Activated naive CD4-positive, alpha-beta T cell treated with anti-CD3 and anti-CD28 coated beads for 36 hours (primary cell): ENCODE measurements at regions of chr6 and their contacts with region 1.

Region 1: DNA sequence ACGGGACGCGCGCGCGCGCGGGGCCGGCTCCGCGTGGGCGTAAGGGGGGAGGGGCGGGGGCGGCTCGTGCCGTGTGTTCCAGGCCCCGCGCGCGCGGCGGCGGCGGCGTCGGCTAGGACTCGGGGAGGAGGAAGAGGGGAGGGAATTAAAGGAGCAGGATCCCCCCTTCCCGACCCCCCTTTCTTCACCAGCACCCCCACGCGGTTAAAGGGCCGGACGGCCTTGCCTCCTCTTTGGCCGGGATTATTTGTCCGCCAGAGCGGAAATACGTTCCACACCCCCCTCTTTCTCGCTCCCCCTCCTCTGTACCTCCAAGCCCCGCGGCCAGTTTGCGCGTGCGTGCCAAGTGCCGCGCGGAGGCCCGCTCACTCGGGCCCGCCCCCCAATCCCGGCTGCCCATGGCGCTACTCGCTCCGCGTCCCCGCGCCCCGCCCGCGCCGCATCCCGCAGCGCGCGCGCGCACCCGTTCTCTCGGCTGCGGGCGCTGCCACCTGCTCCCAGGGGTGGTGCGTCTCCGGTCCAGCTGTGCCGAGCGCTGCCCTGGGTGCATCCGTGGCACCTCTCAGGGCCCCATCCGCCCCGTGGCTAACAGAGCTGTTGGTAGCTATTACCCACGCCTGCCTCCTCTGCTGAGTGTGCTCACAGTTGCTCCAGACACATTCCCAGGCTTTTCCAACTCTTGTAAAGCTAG is at the start of gene ZBTB12:
- DNase-seq: peak; percentile 87
- H3K4me3 Mint-ChIP-seq: peak within 1 kb of the TSS; percentile 82
- H3K27ac Mint-ChIP-seq: peak within 1 kb of the TSS; percentile 81
- H3K4me1 Mint-ChIP-seq: peaks cover 29% of the 10 kb centered on the region
- H3K27me3 Mint-ChIP-seq: no peaks in the 10 kb centered on the region
- total RNA-seq, gene ZBTB12: 0.57 to 0.69 TPM

Region 2: GRCh38 chr6:31834434-31835198 is 67.5 kb before region 1 on chr6:
- CTCF ChIA-PET with region 1: no interaction called
- intact Hi-C with region 1: loop called (anchors 2 kb)
- DNase-seq: peak; percentile 80
- H3K4me3 Mint-ChIP-seq: peak overlapping the region; percentile 94
- H3K27ac Mint-ChIP-seq: peak overlapping the region; percentile 98
- H3K4me1 Mint-ChIP-seq: peaks cover 46% of the 10 kb centered on the region
- H3K27me3 Mint-ChIP-seq: no peaks in the 10 kb centered on the region

Region 3: DNA sequence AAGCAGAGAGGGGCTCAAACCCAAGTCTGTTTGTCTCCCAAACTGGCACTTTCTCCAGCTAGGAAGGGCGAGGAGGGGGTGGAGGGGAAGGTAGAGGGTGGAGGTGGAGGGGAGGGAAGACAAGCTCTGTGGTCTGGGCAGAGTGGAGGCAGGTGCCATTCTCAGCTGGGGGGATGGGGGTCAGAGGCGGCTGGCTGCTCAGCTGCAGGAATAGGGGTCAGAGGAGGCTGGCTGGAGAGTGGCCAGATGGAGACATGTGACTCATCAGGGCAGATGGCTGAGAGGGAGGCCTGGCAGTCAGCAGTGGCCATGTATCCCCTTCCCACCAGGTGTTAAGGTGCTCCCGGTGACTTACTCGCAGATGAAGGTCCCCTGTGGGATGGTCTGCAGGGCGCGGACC is 19.8 kb before region 1 on chr6:
- CTCF ChIA-PET with region 1: no interaction called
- intact Hi-C with region 1: no loop called
- DNase-seq: no peak
- H3K4me3 Mint-ChIP-seq: no peak overlapping the region
- H3K27ac Mint-ChIP-seq: no peak overlapping the region
- H3K4me1 Mint-ChIP-seq: no peaks in the 10 kb centered on the region
- H3K27me3 Mint-ChIP-seq: no peaks in the 10 kb centered on the region

Region 4: DNA sequence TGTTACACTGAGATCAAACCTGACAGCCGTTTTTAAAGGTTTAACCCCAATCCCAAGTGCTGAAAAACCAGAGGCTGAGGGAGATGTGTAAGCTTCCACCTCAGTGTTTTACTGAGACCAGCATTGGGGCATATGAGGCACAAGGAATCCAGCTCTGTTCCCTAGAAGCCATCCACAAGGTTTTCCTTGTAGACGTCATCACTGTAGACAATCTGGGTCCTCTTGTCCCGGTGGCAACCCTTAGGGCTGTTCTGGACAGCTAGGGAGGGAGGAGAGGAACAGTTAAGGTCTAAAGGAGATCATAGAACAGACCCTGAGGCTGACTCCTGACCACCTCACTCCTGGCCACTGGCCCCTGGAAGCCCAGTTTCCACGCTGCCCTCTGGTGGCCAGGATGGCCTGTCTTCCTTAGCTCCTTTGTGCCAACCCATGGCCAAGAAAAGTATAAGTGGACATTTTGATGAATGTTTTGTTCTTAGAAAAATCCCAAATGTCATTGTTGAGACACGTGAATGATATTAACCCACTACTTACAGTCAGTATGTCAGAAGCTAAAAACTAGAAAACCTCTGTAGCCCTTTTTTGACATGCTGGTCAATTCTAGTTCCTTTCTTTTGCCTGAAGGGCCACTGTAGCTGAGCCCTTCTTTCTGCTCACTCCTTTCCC is 50.2 kb after region 1 on chr6:
- CTCF ChIA-PET with region 1: interaction called, 3 read pairs
- intact Hi-C with region 1: loop called (anchors 2 kb)
- DNase-seq: peak; percentile 60
- H3K4me3 Mint-ChIP-seq: no peak overlapping the region
- H3K27ac Mint-ChIP-seq: no peak overlapping the region
- H3K4me1 Mint-ChIP-seq: peaks cover 4% of the 10 kb centered on the region
- H3K27me3 Mint-ChIP-seq: no peaks in the 10 kb centered on the region

Region 5: DNA sequence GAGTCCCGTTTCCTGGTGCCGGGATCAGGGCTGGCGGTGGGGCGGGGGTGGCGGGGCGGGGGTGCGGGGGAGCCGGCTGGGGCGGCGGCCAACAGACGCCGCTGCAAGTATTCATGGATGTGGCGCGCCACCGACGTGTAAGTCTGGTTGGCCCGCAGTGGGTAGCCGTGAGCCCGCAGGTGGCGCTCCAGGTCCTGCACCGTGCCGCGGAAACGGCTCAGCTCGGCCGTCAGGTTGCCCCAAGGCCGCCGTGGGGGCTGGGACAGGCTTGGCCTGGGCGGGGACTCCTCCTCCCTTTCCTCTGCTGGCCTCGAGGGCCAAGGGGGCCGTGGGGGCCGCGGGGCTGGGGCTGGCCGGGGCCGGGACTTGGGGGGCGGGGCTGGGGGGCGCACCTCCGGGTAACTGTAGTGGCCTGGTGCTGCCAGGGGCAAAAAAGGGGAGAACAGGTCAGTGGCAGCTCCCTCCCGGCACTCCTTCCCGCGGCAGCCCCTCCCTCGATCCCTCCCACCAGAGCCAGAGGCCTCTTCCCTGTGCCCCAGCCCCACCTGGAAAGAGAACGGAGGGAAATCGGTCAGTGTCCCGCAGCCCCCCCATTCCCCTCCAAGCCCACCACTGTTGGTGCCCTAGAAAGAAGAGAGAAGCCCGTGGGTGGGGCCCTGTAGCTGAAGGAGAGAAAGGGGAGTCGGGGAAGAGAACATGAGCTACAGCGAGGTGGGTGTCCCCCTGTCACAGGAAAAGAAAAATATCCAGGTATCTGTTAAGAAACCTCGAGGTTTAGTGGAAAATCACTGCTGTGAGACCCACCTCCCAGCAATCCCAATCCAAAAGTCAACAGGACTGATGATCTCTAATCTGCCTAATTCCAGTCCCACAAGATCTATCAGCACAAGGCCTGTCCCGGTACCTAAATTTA is 185.7 kb after region 1 on chr6:
- CTCF ChIA-PET with region 1: no interaction called
- intact Hi-C with region 1: no loop called
- DNase-seq: peak; percentile 89
- H3K4me3 Mint-ChIP-seq: no peak overlapping the region
- H3K27ac Mint-ChIP-seq: no peak overlapping the region
- H3K4me1 Mint-ChIP-seq: peaks cover 8% of the 10 kb centered on the region
- H3K27me3 Mint-ChIP-seq: peaks cover 17% of the 10 kb centered on the region